HCT116 (cell line): ENCODE measurements at regions of chr12 and their contacts with region 1.

Region 1: GRCh38 chr12:118850244-118850825 is 131.0 kb upstream of the SRRM4 start:
- DNase-seq: peak; percentile 13
- ATAC-seq: peak; percentile 70
- H3K4me3 ChIP-seq: no peak overlapping the region
- H3K27ac ChIP-seq: no peak overlapping the region
- H3K4me1 ChIP-seq: no peaks in the 10 kb centered on the region
- H3K27me3 ChIP-seq: 0 out of 2 replicates have a peak, but pooled peaks cover 8% of the 10 kb centered on the region
- CTCF ChIP-seq: peak; percentile 29 to 94 (median 89); a peak in 5 of 6 replicates
- POLR2A ChIP-seq: no peak
- RAD21 ChIP-seq: peak; percentile 55

Region 2: GRCh38 chr12:118404876-118405521 is 445.3 kb before region 1 on chr12:
- CTCF ChIA-PET with region 1: no interaction called
- POLR2A ChIA-PET with region 1: no interaction called
- RAD21 ChIA-PET with region 1: no interaction called
- intact Hi-C with region 1: loop called (anchors 10 kb)
- DNase-seq: peak; percentile 37
- ATAC-seq: peak; percentile 84
- H3K4me3 ChIP-seq: no peak overlapping the region
- H3K27ac ChIP-seq: no peak overlapping the region
- H3K4me1 ChIP-seq: no peaks in the 10 kb centered on the region
- H3K27me3 ChIP-seq: no peaks in the 10 kb centered on the region
- CTCF ChIP-seq: peak; percentile 57 to 90 (median 62)
- POLR2A ChIP-seq: no peak
- RAD21 ChIP-seq: peak; percentile 80